Testis (tissue), 5 donors: ENCODE measurements at regions of chr17 and their contacts with region 1.

Region 1: DNA sequence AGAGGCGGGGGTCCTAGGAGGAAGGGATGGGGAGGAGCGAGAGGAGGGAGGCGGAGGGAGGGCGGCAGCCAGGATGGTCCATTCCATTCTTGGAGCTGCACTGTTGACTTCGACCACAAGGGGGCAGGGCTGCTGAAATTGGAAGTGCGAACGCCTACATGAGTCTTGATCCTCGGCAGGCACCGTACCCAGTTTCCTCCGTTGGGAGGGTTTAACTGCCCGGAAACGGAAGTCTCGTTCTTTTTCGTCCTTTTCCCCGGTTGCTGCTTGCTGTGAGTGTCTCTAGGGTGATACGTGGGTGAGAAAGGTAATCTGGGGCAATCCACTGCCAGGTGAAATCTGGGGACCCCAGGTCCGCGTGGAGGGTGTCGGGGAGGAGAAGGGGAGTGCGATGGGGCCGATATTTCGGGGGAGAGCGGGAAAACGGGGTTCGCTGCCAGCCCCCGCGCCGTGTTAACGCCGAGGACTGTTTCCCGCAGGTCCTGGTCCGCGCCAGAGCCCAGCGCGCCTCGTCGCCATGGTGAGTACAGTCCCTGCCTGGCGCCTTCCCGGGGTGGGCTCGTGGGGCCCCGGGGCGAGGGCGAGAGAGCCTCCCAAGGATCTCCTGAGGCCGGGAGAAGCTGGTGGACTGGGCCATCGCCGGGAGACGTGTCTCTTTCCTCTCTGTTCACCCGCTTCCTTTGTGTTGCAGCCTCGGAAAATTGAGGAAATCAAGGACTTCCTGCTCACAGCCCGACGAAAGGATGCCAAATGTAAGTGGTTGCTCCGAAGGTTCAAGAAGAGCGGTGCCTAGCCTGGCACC is at the start of gene RPL38:
- DNase-seq: peak; percentile 99
- H3K4me3 ChIP-seq: peak within 1 kb of the TSS; percentile 89 to 93
- H3K27ac ChIP-seq: peak within 1 kb of the TSS; percentile 83 to 84
- H3K4me1 ChIP-seq: peaks cover 20% of the 10 kb centered on the region
- H3K27me3 ChIP-seq: no peaks in the 10 kb centered on the region
- CTCF ChIP-seq: peak; percentile 99 to 100 (median 99)
- POLR2A ChIP-seq: peak; percentile 39
- total RNA-seq, gene RPL38: 345 to 563 TPM

Region 2: GRCh38 chr17:74118504-74118903 is 85.1 kb before region 1 on chr17:
- intact Hi-C with region 1: no loop called
- DNase-seq: no peak
- H3K4me3 ChIP-seq: no peak overlapping the region
- H3K27ac ChIP-seq: no peak overlapping the region
- H3K4me1 ChIP-seq: no peaks in the 10 kb centered on the region
- H3K27me3 ChIP-seq: no peaks in the 10 kb centered on the region
- CTCF ChIP-seq: no peak
- POLR2A ChIP-seq: no peak

Region 3: GRCh38 chr17:74368092-74369081 is 164.7 kb after region 1 on chr17:
- intact Hi-C with region 1: loop called (anchors 10 kb)
- DNase-seq: peak; percentile 86
- H3K4me3 ChIP-seq: no peak overlapping the region
- H3K27ac ChIP-seq: no peak overlapping the region
- H3K4me1 ChIP-seq: peaks cover 3% of the 10 kb centered on the region
- H3K27me3 ChIP-seq: no peaks in the 10 kb centered on the region
- CTCF ChIP-seq: peak; percentile 75 to 98 (median 89)
- POLR2A ChIP-seq: no peak